ENCODE measurements at regions of chr7 and their contacts with region 1.

Region 1: DNA sequence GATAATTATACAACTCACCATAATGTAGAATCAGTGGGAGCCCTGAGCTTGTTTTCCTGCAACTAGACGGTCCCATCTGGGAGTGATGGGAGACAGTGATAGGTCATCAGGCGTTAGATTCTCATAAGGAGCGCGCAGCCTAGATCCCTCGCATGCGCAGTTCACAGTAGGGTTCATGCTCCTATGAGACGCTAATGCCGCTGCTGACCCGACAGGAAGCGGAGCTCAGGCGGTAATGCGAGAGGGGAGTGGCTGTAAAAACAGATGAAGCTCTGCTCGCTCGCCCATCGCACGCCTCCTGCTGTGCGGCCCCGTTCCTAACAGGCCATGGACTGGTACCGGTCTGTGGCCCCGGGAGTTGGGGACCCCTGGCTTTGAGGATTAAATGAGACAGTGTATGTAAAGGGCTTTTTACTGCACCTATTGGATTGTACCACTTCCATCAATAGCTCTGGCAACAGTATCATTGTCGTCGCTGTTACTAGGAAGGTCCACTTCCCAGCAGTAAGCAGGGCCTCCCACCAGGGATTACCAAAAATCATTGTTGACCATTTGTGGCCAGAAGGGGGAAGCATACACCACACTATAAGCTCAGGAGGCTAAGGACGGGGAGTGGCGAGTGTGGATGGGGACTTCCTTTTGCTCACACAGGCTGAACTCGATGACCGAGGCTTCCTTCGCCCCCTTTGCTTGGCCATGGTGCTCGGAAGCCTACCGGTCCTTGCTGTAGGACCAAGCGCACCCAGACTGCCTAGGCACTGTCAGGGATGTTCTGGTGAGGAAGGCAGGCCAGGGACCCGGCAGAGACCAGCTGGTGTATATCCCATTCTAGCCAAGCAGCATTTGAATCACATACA is 26.4 kb downstream of the AKR1B1 start:
- DNase-seq: peak; percentile 88 to 94
- H3K4me3 ChIP-seq: peak overlapping the region; percentile 39
- H3K4me3 Mint-ChIP-seq: peak overlapping the region; percentile 84
- H3K27ac Mint-ChIP-seq: peak overlapping the region; percentile 72
- H3K4me1 ChIP-seq: peaks cover 19% of the 10 kb centered on the region
- H3K4me1 Mint-ChIP-seq: peaks cover 17% of the 10 kb centered on the region
- H3K27me3 ChIP-seq: no peaks in the 10 kb centered on the region
- H3K27me3 Mint-ChIP-seq: peaks cover 4% of the 10 kb centered on the region
- CTCF ChIP-seq: peak; percentile 69 to 85

Region 2: DNA sequence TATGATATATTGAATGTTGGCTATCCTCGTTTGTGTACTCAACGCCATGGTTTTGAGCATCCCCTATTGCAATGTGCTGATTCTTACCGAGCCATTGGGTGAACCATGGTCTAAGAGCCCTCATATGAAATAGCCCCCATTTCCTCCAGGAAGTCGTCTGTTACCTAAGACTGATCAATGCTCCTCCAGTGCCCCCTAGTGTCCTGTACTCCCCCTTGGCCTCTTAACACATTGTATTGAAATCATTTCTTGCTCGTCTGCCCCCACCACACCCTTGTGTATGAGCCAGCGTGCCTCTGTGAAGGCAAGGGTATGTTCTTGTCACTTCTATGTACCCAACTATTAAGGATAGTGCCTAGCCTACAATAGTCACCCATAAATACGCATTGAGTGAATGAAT is 104.6 kb before region 1 on chr7:
- CTCF ChIA-PET with region 1: no interaction called
- POLR2A ChIA-PET with region 1: no interaction called
- intact Hi-C with region 1: no loop called
- DNase-seq: peak; percentile 56 to 62
- H3K4me3 ChIP-seq: no peak overlapping the region
- H3K4me3 Mint-ChIP-seq: no peak overlapping the region
- H3K27ac Mint-ChIP-seq: no peak overlapping the region
- H3K4me1 ChIP-seq: no peaks in the 10 kb centered on the region
- H3K4me1 Mint-ChIP-seq: peaks cover 7% of the 10 kb centered on the region
- H3K27me3 ChIP-seq: no peaks in the 10 kb centered on the region
- H3K27me3 Mint-ChIP-seq: peaks cover 13% of the 10 kb centered on the region
- CTCF ChIP-seq: peak; percentile 29 to 51

Region 3: DNA sequence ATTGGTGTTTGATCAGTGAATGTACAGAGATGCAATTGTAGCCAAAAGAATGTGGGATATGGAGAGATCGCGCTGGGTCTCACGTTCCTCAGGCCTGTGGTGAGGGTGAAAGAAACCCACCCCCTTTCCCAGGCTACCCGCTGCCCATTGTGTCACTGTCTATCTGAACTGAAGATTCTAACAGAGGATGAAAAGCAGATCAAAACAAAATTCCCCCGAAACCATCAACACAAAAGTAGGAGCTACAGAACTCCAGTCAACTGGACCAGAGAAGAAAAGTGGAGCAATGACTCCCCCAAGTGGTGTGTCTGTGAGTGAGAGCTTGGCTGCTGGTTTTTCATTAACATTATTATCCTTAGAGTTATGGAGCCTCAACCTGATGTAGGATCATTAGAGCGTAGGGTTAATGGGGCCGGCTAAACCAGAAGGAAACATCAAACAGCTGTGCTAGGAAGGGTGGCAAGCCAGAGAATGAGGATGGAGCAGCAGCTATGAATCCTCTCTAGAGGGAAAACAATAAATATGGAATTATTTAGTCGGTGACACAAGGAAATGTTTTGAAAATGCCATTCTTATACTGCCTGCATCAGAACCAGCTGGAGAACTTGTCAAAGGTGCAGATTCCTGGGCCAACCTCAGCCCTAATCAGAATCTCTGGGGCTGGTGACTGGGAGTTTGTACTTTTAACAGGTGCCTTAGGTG is 11.9 kb before region 1 on chr7:
- CTCF ChIA-PET with region 1: interaction called, 21 read pairs
- POLR2A ChIA-PET with region 1: no interaction called
- intact Hi-C with region 1: no loop called
- DNase-seq: peak; percentile 53 to 63
- H3K4me3 ChIP-seq: no peak overlapping the region
- H3K4me3 Mint-ChIP-seq: no peak overlapping the region
- H3K27ac Mint-ChIP-seq: no peak overlapping the region
- H3K4me1 ChIP-seq: peaks cover 7% of the 10 kb centered on the region
- H3K4me1 Mint-ChIP-seq: peaks cover 11% of the 10 kb centered on the region
- H3K27me3 ChIP-seq: no peaks in the 10 kb centered on the region
- H3K27me3 Mint-ChIP-seq: peaks cover 6% of the 10 kb centered on the region
- CTCF ChIP-seq: peak; percentile 61 to 67

Region 4: GRCh38 chr7:134480736-134481135 is 48.2 kb after region 1 on chr7:
- CTCF ChIA-PET with region 1: interaction called, 11 read pairs
- POLR2A ChIA-PET with region 1: no interaction called
- intact Hi-C with region 1: loop called (anchors 5 kb)
- DNase-seq: no peak
- H3K4me3 ChIP-seq: no peak overlapping the region
- H3K4me3 Mint-ChIP-seq: no peak overlapping the region
- H3K27ac Mint-ChIP-seq: no peak overlapping the region
- H3K4me1 ChIP-seq: peaks cover 10% of the 10 kb centered on the region
- H3K4me1 Mint-ChIP-seq: no peaks in the 10 kb centered on the region
- H3K27me3 ChIP-seq: no peaks in the 10 kb centered on the region
- H3K27me3 Mint-ChIP-seq: no peaks in the 10 kb centered on the region
- CTCF ChIP-seq: no peak

Region 5: DNA sequence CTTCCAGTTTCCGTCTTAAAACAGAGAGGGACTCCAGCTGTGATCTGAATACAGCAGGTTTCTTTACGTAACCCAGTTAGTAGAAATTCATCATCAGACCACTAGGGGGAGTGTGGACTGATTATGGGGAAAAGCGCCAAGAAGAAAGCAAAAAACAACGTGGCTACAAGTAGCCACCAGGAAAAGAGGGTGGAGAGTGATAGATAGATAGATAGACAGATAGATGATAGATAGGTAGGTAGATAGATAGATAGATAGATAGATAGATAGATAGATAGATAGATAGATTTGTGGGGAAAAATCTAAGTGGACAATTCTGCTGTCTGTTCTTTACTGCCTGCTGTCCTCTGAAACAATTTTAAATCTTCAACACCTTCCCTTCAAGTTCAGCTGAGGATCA is 82.1 kb after region 1 on chr7:
- CTCF ChIA-PET with region 1: interaction called, 32 read pairs
- POLR2A ChIA-PET with region 1: no interaction called
- intact Hi-C with region 1: loop called (anchors 1 kb)
- DNase-seq: peak in 1 of 2 experiments; percentile 76
- H3K4me3 ChIP-seq: no peak overlapping the region
- H3K4me3 Mint-ChIP-seq: no peak overlapping the region
- H3K27ac Mint-ChIP-seq: no peak overlapping the region
- H3K4me1 ChIP-seq: no peaks in the 10 kb centered on the region; the same call in 1 of the 2 replicates
- H3K4me1 Mint-ChIP-seq: peaks cover 7% of the 10 kb centered on the region
- H3K27me3 ChIP-seq: no peaks in the 10 kb centered on the region
- H3K27me3 Mint-ChIP-seq: peaks cover 14% of the 10 kb centered on the region
- CTCF ChIP-seq: peak; percentile 86 to 87

Region 6: GRCh38 chr7:134547397-134548054 is 115.0 kb after region 1 on chr7:
- CTCF ChIA-PET with region 1: interaction called, 39 read pairs
- POLR2A ChIA-PET with region 1: no interaction called
- intact Hi-C with region 1: loop called (anchors 1 kb)
- DNase-seq: peak; percentile 60 to 68
- H3K4me3 ChIP-seq: 0 out of 2 replicates have a peak overlapping the region, but pooled peaks have one; percentile 4
- H3K4me3 Mint-ChIP-seq: peak overlapping the region; percentile 55
- H3K27ac Mint-ChIP-seq: no peak overlapping the region
- H3K4me1 ChIP-seq: no peaks in the 10 kb centered on the region
- H3K4me1 Mint-ChIP-seq: no peaks in the 10 kb centered on the region
- H3K27me3 ChIP-seq: no peaks in the 10 kb centered on the region
- H3K27me3 Mint-ChIP-seq: peaks cover 22% of the 10 kb centered on the region
- CTCF ChIP-seq: peak; percentile 77 to 84

Region 7: DNA sequence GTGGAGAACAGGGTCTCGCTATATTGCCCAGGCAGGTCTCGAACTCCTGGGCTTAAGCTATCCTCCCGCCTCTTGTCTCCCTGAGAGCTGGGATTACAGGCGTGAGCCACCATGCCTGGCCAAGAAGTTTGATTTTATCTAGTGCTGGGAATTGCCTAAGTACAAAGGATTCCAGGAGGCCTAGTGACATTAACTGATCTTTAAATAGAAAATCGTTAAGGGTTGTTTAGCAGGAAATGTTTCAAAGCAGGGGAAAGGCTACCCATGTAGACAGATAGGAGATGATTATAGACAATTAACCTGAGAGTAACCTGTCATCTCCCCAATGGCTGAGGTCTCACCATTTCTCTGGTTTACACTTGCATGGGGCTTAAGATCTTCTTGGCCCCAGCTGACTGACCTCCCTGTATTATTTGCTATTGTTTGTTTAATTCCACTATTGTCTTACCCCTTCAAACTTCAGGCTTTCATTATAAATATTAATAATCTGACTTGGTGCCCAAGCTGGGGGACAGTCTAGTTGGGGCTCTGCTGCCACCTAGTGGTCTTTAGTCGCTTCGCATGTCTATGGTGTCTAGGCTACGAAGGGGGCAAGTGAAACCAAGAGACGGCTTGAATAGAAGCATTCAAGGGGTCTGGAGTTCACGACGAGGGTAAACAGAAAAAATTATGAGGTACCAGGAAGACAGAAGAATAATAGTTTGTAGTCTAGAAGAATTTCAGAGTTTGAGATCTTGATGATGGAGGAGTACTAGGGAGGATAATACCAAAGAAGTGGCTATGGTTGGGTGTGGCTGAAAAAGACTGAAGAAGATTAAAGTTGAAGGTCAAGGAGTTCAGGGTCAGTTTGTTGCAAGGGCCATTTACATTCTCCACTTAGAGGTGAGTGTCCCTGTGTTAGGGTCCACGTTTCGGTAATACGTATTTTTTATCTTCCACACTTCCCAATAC is 173.7 kb after region 1 on chr7:
- CTCF ChIA-PET with region 1: interaction called, 15 read pairs
- POLR2A ChIA-PET with region 1: interaction called, 4 read pairs
- intact Hi-C with region 1: loop called (anchors 1 kb)
- DNase-seq: peak; percentile 47 to 59
- H3K4me3 ChIP-seq: no peak overlapping the region
- H3K4me3 Mint-ChIP-seq: no peak overlapping the region
- H3K27ac Mint-ChIP-seq: no peak overlapping the region
- H3K4me1 ChIP-seq: peaks cover 7% of the 10 kb centered on the region; the same call in 1 of the 2 replicates
- H3K4me1 Mint-ChIP-seq: peaks cover 7% of the 10 kb centered on the region
- H3K27me3 ChIP-seq: peaks cover under 1% of the 10 kb centered on the region
- H3K27me3 Mint-ChIP-seq: peaks cover 7% of the 10 kb centered on the region
- CTCF ChIP-seq: peak; percentile 90 to 91

Region 8: DNA sequence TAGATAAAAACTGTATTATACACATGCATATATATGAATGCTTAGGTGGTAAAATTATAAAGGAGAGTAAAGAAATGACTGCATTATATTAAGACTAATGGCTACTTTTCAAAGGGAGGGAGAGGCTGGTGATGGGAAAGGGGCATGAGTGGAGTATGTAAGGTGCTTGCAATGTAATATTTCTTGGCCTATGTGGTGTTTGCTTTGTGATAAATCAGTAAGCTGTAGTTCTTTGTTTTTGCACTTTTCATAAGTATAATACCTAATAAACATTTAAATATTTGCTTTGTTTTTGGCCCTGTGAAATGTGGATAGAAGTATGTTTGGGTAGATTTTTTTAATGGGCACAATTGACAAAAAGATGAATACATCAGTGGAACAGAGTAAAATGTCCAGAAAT is 579.7 kb after region 1 on chr7:
- CTCF ChIA-PET with region 1: interaction called, 10 read pairs
- POLR2A ChIA-PET with region 1: no interaction called
- intact Hi-C with region 1: no loop called
- DNase-seq: no peak
- H3K4me3 ChIP-seq: no peak overlapping the region
- H3K4me3 Mint-ChIP-seq: no peak overlapping the region
- H3K27ac Mint-ChIP-seq: no peak overlapping the region
- H3K4me1 ChIP-seq: no peaks in the 10 kb centered on the region
- H3K4me1 Mint-ChIP-seq: peaks cover 9% of the 10 kb centered on the region
- H3K27me3 ChIP-seq: no peaks in the 10 kb centered on the region
- H3K27me3 Mint-ChIP-seq: no peaks in the 10 kb centered on the region
- CTCF ChIP-seq: no peak